Heart right ventricle (tissue), 16 donors: ENCODE measurements at regions of chr5 and their contacts with region 1.

Region 1: DNA sequence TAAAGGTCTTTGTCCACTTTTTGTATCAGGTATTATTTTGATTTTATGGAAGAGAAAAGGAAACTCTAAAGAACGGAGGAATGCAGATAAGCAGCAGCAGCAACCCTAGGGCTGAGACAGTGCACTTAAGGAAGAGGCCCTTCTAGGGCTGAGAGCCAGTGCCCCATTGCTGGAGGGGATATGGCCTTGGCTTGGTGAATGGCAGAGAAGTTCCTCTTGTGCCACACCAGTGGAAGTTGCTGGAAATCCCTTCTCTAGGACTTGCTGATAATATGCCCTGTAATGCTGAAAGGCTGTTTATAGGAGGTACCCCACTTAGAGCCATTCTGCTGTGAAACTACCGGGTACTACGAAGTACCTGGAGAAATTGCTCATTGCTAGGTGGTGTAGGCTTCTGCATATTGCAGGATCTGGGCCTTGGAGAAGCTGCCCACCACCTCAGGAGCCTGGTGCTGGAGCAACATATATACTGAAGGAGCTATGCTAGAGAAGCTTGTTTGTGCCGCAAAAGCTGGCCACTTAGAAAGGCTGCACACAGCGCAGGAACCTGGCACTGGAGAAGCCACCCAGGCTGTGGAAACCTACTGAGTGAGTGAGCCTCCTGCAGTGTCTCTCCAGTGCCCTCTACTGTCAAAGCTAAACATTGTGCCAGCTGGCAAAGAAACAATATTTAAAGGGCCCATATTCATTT is 9.6 kb upstream of the UBTD2 start:
- DNase-seq: peak; percentile 44 to 58
- ATAC-seq: peak; percentile 92 to 98 (median 94)
- H3K4me3 ChIP-seq: no peak overlapping the region
- H3K27ac ChIP-seq: no peak overlapping the region
- H3K4me1 ChIP-seq: peaks cover 0 to 9% (median 4%) of the 10 kb centered on the region in 9 donors
- H3K27me3 ChIP-seq: peaks cover 0 to 3% (median 0%) of the 10 kb centered on the region in 7 donors
- CTCF ChIP-seq: peak; percentile 69 to 91 (median 83)

Region 2: GRCh38 chr5:172194985-172195774 is 98.0 kb before region 1 on chr5:
- intact Hi-C with region 1: loop called in 3 of 10 experiments (anchors 5 to 10 kb)
- DNase-seq: no peak
- ATAC-seq: no peak
- H3K4me3 ChIP-seq: no peak overlapping the region
- H3K27ac ChIP-seq: no peak overlapping the region
- H3K4me1 ChIP-seq: no peaks in the 10 kb centered on the region
- H3K27me3 ChIP-seq: no peaks in the 10 kb centered on the region
- CTCF ChIP-seq: no peak